ENCODE measurements at regions of chr22 and their contacts with region 1.

Region 1: DNA sequence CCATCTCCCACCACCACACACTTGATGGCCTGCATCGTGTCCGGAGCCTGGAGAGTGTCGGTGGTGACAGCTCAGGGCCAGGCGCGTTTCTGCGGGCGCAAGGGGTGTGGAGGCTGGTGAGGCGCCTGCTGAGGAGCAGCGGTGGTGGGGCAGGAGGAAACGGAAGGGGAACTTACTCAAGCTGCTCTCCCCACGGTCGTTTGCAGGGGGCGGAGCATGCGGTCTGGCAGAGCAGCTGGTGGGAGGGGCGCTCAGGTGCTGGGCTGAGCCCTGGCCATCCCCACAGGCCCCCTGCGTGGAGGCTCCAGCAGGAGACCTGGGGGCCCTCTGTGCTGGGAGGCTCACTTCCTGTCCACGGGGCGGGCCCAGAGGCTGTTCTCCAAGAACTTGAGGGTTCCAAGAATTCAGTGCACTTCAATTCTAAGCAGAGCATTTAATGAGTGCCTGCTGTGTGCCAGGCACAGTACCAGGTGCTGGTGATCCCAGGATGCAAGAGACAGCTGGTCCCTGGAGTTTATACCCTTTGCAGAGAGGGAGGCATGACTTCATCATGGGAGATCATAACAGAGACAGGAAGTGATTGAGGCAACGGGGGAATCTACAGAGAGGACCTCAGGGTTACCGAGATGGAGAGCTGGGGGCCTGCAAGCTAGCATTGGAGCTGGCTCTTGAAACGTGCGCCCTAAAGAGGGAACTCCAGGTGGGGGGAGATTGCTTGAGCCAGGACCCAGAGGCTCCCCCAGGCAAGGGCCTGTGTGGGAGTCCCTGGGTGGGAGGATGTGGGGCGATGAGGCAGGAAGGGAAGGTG is at the start of gene RAC2:
- DNase-seq: peak; percentile 74
- H3K4me3 Mint-ChIP-seq: peak within 1 kb of the TSS; percentile 80
- H3K27ac Mint-ChIP-seq: peak within 1 kb of the TSS; percentile 35
- H3K4me1 Mint-ChIP-seq: peaks cover 13% of the 10 kb centered on the region
- H3K27me3 Mint-ChIP-seq: no peaks in the 10 kb centered on the region
- CTCF ChIP-seq: no peak
- total RNA-seq, gene RAC2: 42.4 and 52.6 TPM in 2 replicates

Region 2: DNA sequence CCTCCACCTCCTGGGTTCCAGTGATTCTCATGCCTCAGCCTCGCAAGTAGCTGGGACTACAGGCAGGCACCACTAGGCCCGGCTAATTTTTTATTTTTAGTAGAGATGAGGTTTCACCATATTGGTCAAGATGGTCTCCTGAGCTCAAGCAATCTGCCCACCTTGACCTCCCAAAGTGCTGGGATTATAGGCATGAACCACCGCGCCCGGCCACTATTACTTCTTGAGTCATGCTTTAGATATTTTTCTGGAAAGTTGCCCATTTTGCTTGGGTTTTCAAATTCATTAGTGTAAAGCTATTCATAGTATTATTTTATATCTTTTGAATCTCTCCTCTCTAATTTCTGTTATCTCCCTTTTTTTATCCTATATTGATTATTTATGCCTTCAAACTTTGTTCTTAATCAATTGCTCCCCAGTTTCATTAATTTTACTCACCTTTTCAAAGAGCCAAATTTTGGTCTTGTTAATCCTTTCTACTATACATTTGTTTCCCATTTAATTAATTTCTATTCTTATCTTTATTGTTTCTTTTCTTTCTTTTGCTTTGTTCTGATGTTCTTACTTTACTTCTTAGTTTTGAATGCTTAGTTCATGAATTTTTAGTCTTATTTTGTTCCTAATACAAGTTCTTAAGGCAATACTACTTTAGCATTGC is 10.0 kb after region 1 on chr22:
- CTCF ChIA-PET with region 1: interaction called, 62 read pairs
- POLR2A ChIA-PET with region 1: interaction called, 27 read pairs
- intact Hi-C with region 1: no loop called
- DNase-seq: peak; percentile 83
- H3K4me3 Mint-ChIP-seq: no peak overlapping the region
- H3K27ac Mint-ChIP-seq: no peak overlapping the region
- H3K4me1 Mint-ChIP-seq: peaks cover 23% of the 10 kb centered on the region
- H3K27me3 Mint-ChIP-seq: no peaks in the 10 kb centered on the region
- CTCF ChIP-seq: no peak

Measured in MCF 10A (cell line).